Natural killer cell (primary cell): ENCODE measurements at regions of chr12 and their contacts with region 1.

Region 1: DNA sequence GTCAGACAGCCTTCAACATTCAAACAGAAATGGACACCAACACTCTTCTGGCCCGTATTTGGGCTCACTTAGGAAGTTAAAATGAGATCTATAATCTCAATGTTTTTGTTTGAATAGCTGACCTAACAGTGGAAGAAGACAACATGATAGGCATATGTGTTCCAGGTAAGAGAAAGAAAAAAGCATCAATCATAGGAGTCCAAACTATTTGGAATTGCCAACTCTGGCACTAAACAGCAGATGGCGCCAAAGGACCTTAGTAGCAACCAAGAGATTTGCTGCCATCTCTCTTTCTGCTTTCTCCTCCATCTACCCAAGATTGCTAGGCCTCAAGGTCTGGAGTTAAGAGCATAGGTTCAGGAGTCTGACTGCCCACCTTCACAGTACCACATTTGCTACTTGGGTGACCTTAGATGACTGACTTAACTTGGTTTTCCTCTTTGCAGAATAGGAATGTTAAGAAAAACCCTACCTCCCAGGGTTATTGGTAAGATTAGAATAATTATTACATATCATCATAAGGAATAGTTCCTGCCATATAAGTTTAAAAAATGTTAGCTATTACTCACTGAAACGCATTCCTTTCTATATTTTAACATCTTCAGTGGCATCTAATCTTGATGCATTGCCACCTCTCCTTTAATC is 30.2 kb downstream of the PEX5 start:
- DNase-seq: peak; percentile 53 to 87
- ATAC-seq: peak in 2 of 3 donors; percentile 70 to 74
- H3K4me3 ChIP-seq: no peak overlapping the region
- H3K4me3 Mint-ChIP-seq: no peak overlapping the region
- H3K27ac ChIP-seq: no peak overlapping the region
- H3K27ac Mint-ChIP-seq: no peak overlapping the region
- H3K4me1 ChIP-seq: no peaks in the 10 kb centered on the region
- H3K4me1 Mint-ChIP-seq: no peaks in the 10 kb centered on the region
- H3K27me3 ChIP-seq: no peaks in the 10 kb centered on the region
- H3K27me3 Mint-ChIP-seq: peaks cover 12% of the 10 kb centered on the region in 2 donors
- CTCF ChIP-seq: peak; percentile 90

Region 2: GRCh38 chr12:7175493-7175892 is 44.2 kb before region 1 on chr12:
- intact Hi-C with region 1: no loop called
- DNase-seq: no peak
- ATAC-seq: no peak
- H3K4me3 ChIP-seq: no peak overlapping the region
- H3K4me3 Mint-ChIP-seq: no peak overlapping the region
- H3K27ac ChIP-seq: no peak overlapping the region
- H3K27ac Mint-ChIP-seq: no peak overlapping the region
- H3K4me1 ChIP-seq: no peaks in the 10 kb centered on the region
- H3K4me1 Mint-ChIP-seq: no peaks in the 10 kb centered on the region
- H3K27me3 ChIP-seq: peaks cover 6% of the 10 kb centered on the region
- H3K27me3 Mint-ChIP-seq: peaks cover 18 to 54% of the 10 kb centered on the region in 2 donors
- CTCF ChIP-seq: no peak

Region 3: GRCh38 chr12:7197841-7198240 is 21.9 kb before region 1 on chr12:
- intact Hi-C with region 1: no loop called
- DNase-seq: no peak
- ATAC-seq: no peak
- H3K4me3 ChIP-seq: no peak overlapping the region
- H3K4me3 Mint-ChIP-seq: no peak overlapping the region
- H3K27ac ChIP-seq: no peak overlapping the region
- H3K27ac Mint-ChIP-seq: no peak overlapping the region
- H3K4me1 ChIP-seq: no peaks in the 10 kb centered on the region
- H3K4me1 Mint-ChIP-seq: peaks cover 6 to 21% of the 10 kb centered on the region in 2 donors
- H3K27me3 ChIP-seq: no peaks in the 10 kb centered on the region
- H3K27me3 Mint-ChIP-seq: no peaks in the 10 kb centered on the region
- CTCF ChIP-seq: no peak

Region 4: DNA sequence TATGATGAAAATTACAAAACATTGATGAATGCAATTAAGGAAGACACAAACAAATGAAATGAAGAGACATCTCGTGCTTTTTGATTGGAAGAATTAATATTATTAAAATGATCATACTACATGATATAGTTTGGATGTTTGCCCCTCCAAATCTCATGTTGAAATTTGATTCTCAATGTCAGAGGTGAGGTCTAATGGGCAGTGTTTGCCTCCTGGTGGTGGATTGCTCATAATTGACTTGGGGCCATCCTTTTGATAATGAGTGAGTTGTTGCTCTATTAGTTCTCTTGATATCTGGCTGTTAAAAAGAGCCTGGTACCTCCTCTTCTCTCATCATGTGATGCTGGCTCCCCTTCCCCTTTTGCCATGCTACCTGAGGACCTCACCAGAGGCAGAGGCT is 167.6 kb after region 1 on chr12:
- intact Hi-C with region 1: loop called (anchors 1 kb)
- DNase-seq: peak in 1 of 2 donors; percentile 16
- ATAC-seq: no peak
- H3K4me3 ChIP-seq: no peak overlapping the region
- H3K4me3 Mint-ChIP-seq: no peak overlapping the region
- H3K27ac ChIP-seq: no peak overlapping the region
- H3K27ac Mint-ChIP-seq: no peak overlapping the region
- H3K4me1 ChIP-seq: no peaks in the 10 kb centered on the region
- H3K4me1 Mint-ChIP-seq: no peaks in the 10 kb centered on the region
- H3K27me3 ChIP-seq: peaks cover 2% of the 10 kb centered on the region
- H3K27me3 Mint-ChIP-seq: peaks cover 13 to 39% of the 10 kb centered on the region in 2 donors
- CTCF ChIP-seq: peak; percentile 10

Region 5: DNA sequence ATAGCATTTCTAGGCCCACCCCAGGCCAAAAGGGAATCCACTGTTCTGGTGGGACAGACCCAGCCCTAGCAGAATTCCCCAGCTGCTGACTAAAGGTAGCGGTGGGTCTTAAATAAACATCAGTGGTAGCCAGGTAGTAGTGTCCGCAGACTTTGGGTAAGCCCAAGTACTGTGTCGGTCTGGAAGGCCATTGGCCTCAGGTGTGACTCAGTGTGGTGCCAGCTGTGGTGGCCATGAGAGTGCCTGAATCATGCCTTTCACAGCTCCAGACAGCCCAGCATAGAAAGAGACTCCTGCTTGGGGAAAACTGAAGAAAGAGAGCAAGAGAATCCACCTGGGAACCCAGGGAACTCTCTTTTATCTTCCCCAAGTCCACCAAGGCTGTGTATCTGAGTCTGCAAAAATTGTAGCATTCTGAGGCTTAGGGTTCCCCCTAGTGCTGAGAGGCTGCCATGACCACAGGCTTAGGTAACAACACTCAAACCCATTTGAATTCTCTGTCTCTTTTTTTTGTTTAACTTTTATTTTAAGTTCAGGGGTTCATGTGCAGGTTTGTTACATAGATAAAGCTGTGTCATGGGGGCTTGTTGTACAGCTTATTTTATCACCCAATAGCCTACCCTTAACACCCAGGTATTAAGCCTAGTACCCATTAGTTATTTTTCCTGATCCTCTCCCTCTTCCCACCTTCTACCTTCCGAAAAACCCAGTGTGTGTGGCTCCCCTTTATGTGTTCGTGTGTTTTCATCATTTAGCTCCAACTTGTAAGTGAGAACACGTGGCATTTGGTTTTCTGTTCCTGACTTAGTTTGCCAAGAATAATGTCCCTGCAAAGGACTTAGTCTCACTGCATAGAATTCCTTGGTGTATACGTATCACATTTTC is 240.9 kb after region 1 on chr12:
- intact Hi-C with region 1: loop called (anchors 1 kb)
- DNase-seq: peak; percentile 43 to 72
- ATAC-seq: peak; percentile 77 to 83 (median 80)
- H3K4me3 ChIP-seq: no peak overlapping the region
- H3K4me3 Mint-ChIP-seq: no peak overlapping the region
- H3K27ac ChIP-seq: no peak overlapping the region
- H3K27ac Mint-ChIP-seq: no peak overlapping the region
- H3K4me1 ChIP-seq: no peaks in the 10 kb centered on the region
- H3K4me1 Mint-ChIP-seq: no peaks in the 10 kb centered on the region
- H3K27me3 ChIP-seq: peaks cover 4% of the 10 kb centered on the region
- H3K27me3 Mint-ChIP-seq: peaks cover 5 to 21% of the 10 kb centered on the region in 2 donors
- CTCF ChIP-seq: peak; percentile 76

Region 6: DNA sequence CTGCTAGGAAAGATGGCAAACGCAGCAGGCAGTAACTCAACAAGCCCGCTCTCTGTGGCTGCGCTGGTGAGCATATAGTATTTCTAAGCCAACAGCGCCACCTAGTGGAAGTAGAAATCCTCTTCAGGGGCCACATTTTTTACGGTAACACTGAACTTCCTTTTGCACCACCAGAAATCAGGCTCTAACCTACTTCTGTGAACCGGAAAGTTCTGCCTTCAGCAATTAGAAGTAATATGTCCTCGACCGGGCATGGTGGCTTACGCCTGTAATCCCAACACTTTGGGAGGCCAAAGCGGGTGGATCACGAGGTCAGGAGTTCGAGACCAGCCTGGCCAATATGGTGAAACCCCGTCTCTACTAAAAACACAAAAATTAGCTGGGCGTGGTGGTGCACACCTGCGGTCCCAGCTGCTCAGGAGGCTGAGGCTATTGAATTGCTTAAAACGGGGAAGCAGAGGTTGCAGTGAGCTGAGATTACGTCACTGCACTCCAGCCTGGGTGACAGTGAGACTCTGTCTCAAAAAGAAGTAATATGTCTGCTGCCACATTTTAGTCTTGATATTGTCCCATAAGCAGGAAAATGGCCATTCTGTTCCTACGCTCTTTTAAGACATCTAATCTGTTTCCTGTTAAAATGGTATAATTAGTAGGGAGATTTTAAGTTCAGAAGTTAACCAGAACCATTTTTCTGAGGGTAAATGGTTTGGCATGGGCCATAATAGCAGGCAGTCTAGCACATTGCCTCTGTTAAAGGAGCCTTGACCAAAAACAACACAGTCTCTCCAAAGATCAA is 419.2 kb after region 1 on chr12:
- intact Hi-C with region 1: loop called (anchors 1 kb)
- DNase-seq: peak; percentile 45 to 93
- ATAC-seq: peak; percentile 88 to 90 (median 88)
- H3K4me3 ChIP-seq: no peak overlapping the region
- H3K4me3 Mint-ChIP-seq: peak overlapping the region; percentile 86
- H3K27ac ChIP-seq: peak overlapping the region; percentile 46
- H3K27ac Mint-ChIP-seq: peak overlapping the region; percentile 73 to 77
- H3K4me1 ChIP-seq: peaks cover 21% of the 10 kb centered on the region
- H3K4me1 Mint-ChIP-seq: peaks cover 21 to 24% of the 10 kb centered on the region in 2 donors
- H3K27me3 ChIP-seq: no peaks in the 10 kb centered on the region
- H3K27me3 Mint-ChIP-seq: peaks cover 8 to 9% of the 10 kb centered on the region in 2 donors
- CTCF ChIP-seq: peak; percentile 90

Region 7: GRCh38 chr12:7695237-7696197 is 475.8 kb after region 1 on chr12 and contains the start of gene GDF3:
- intact Hi-C with region 1: no loop called
- DNase-seq: no peak
- ATAC-seq: no peak
- H3K4me3 ChIP-seq: no peak within 1 kb of the TSS
- H3K4me3 Mint-ChIP-seq: no peak within 1 kb of the TSS
- H3K27ac ChIP-seq: no peak within 1 kb of the TSS
- H3K27ac Mint-ChIP-seq: no peak within 1 kb of the TSS
- H3K4me1 ChIP-seq: peaks cover 3% of the 10 kb centered on the region
- H3K4me1 Mint-ChIP-seq: peaks cover 5 to 10% of the 10 kb centered on the region in 2 donors
- H3K27me3 ChIP-seq: peaks cover 3% of the 10 kb centered on the region
- H3K27me3 Mint-ChIP-seq: peaks cover 16 to 21% of the 10 kb centered on the region in 2 donors
- CTCF ChIP-seq: no peak
- total RNA-seq, gene GDF3: not detected